ENCODE measurements at regions of chr4 and their contacts with region 1.

Region 1: DNA sequence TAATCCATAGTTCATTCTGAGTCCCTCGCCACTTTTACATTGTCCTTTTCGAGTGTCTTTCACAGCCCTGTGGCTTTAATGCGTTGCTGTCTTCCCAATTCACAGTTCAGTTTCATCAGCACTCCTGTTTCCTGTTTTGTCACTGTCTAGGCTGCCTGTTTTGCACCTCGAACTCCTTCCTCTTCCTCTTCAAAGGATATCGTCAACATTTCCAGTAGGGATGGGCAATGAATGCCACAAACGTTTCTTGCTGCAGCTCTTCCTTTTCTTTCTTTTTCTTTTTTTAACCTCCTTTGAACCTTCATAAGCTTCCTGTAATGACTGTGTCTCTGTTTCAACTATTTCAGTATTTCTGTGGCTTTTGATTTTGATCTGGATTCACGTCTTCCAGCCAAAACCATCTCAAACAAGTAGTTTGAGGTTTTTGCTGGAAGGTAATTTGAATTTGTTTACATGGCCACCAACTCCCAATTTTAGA is 105.4 kb downstream of the ANXA3 start:
- DNase-seq: peak in 1 of 2 donors; percentile 21
- ATAC-seq: peak in 7 of 8 donors; percentile 42 to 74 (median 59)
- H3K4me3 ChIP-seq: no peak overlapping the region
- H3K27ac ChIP-seq: peak overlapping the region in 6 of 10 donors; percentile 11 to 81 (median 44)
- H3K4me1 ChIP-seq: peaks cover 0 to 99% (median 28%) of the 10 kb centered on the region in 9 donors
- H3K27me3 ChIP-seq: no peaks in the 10 kb centered on the region
- CTCF ChIP-seq: no peak

Region 2: DNA sequence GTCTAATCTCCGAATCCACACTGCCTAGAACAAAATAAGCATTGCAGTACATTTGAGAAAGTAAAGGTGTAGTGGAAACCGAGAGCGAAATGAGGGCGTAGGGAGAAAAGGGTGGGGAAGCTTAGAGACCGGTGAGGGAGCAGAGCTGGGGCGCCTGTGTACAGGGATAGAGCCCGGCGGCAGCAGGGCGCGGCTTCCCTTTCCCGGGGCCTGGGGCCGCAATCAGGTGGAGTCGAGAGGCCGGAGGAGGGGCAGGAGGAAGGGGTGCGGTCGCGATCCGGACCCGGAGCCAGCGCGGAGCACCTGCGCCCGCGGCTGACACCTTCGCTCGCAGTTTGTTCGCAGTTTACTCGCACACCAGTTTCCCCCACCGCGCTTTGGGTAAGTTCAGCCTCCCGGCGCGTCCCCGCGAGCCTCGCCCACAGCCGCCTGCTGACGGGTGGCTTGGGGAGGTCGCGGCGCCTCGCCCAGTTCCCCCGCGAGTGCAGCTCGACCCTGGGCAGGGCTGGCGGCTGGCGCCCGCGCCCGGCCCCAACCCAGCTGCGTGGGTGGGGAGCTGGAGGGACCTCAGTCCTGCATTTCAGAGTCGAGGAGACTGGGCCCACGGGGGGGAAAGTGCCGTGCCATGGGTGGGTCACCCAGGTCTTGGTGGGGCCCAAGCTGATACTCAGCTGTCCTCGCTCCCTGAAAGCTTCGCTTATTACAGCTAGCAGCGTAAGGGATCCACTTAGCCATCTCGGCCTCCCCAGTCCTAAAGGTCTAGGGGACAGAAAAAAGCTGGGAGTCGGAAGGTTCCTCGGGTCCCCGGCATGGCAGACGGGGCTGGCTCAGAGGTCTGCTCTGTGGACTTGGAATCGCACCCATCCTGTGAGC is 105.3 kb before region 1 on chr4 and contains the start of gene ANXA3:
- intact Hi-C with region 1: loop called in 1 of 10 experiments (anchors 10 kb)
- DNase-seq: peak; percentile 29 to 55
- ATAC-seq: peak; percentile 82 to 92 (median 90)
- H3K4me3 ChIP-seq: peak within 1 kb of the TSS; percentile 30 to 80 (median 70)
- H3K27ac ChIP-seq: peak within 1 kb of the TSS; percentile 75 to 94 (median 88)
- H3K4me1 ChIP-seq: peaks cover 0 to 32% (median 9%) of the 10 kb centered on the region in 9 donors
- H3K27me3 ChIP-seq: peaks cover 0 to 22% (median 0%) of the 10 kb centered on the region in 7 donors
- CTCF ChIP-seq: no peak
- total RNA-seq, gene ANXA3: 10.2 to 72.5 (median 18.9) TPM

Region 3: DNA sequence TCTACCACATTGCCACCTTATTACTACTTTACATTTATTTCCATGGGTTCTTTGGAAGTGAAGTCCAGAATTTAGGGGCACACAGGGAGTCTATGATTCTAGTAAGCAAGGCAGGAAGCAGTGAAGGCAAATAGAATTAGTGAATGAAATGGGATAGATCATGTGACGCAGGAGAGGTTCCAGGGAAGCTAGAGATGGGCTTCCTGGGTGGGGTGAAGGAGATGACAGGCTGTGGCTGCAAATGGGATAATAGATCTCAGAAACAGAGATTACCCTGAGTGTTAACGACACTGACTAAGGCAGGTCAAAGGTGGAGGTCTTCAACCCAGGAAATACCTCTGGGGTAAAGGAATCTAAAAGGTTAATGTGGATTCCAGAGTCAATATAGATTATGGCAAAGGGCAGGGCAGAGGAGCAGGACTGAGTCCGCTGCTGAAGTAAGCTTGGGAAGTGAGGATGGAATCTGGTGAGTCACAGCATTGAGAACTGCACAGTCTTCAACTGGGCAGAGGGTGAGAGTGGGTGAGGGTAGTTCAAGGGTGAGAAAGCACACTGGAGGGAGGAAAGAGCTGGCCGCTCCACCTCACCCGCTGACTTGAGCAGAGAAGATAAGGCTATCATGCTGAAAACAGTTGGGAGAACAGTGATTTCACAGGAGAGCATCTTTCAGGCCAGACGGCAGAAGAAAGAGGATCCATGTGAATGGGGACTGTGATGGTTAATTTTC is 34.6 kb before region 1 on chr4:
- intact Hi-C with region 1: no loop called
- DNase-seq: no peak
- ATAC-seq: peak in 1 of 8 donors; percentile 70
- H3K4me3 ChIP-seq: no peak overlapping the region
- H3K27ac ChIP-seq: no peak overlapping the region
- H3K4me1 ChIP-seq: no peaks in the 10 kb centered on the region
- H3K27me3 ChIP-seq: no peaks in the 10 kb centered on the region
- CTCF ChIP-seq: no peak